ENCODE measurements at regions of chr9 and their contacts with region 1.

Region 1: DNA sequence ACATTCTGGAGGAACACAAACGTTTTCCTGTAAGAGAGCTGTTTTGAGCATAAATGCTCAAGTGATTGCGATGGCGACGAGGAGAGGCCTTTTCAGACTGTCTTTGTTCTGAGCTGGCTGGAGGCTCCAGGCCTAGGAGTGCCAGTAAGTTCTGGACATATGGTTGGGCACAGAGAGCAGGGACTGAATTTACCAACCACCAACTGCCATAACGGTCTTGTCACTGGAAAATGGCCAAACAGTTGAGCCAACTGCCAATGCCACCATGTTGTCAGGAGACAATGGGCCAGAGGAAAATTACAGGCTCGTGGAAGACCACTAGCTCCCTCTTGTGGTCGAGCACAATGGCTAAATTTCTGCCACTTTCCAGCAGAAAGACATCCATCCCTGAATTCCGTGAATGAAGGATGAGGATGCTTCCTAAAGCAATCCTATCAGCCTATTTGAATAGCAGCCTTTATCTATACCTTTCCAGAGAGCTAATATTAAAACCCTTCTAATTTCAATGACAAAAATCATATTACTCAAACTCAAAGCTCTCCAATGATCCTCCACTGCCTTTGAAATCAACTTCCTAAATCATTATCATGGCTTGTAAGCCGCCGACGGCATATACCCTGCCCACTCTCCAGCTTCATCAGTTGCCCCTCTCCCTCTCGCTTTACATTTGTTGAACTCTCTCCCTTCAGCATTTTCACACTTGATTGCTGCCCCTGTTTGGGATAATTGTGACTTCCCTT is 66.9 kb upstream of the GLIS3 start:
- DNase-seq: peak; percentile 64
- H3K4me3 ChIP-seq: no peak overlapping the region
- H3K27ac ChIP-seq: peak overlapping the region in 1 of 4 donors; percentile 27
- H3K4me1 ChIP-seq: no peaks in the 10 kb centered on the region
- H3K27me3 ChIP-seq: no peaks in the 10 kb centered on the region
- CTCF ChIP-seq: peak; percentile 48 to 73 (median 54)
- EP300 ChIP-seq: no peak
- POLR2A ChIP-seq: no peak

Region 2: DNA sequence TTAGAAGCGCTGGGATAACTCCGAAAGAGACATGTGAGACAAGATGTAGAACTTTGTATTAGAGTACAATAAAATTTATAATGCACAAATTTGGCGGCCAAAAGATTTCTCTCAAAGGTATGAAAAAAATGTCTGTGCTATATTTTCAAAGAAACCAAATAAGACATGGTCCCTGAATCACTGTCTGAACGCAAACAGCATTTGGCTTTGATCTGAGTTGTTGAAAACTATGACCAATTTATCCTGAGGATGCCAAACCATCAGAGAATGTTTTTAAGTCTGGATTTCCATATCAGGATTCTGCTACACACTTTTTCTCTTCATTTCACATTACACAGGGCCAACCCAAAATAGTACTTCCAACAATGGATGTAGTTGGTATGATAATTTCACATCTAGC is 57.0 kb before region 1 on chr9:
- intact Hi-C with region 1: loop called (anchors 5 kb)
- DNase-seq: no peak
- H3K4me3 ChIP-seq: no peak overlapping the region
- H3K27ac ChIP-seq: no peak overlapping the region
- H3K4me1 ChIP-seq: no peaks in the 10 kb centered on the region
- H3K27me3 ChIP-seq: no peaks in the 10 kb centered on the region
- CTCF ChIP-seq: no peak
- EP300 ChIP-seq: no peak
- POLR2A ChIP-seq: no peak

Region 3: GRCh38 chr9:4404156-4404555 is 37.4 kb after region 1 on chr9:
- intact Hi-C with region 1: no loop called
- DNase-seq: no peak
- H3K4me3 ChIP-seq: no peak overlapping the region
- H3K27ac ChIP-seq: no peak overlapping the region
- H3K4me1 ChIP-seq: no peaks in the 10 kb centered on the region
- H3K27me3 ChIP-seq: no peaks in the 10 kb centered on the region
- CTCF ChIP-seq: no peak
- EP300 ChIP-seq: no peak
- POLR2A ChIP-seq: no peak

Region 4: GRCh38 chr9:4519604-4520003 is 152.8 kb after region 1 on chr9:
- intact Hi-C with region 1: no loop called
- DNase-seq: no peak
- H3K4me3 ChIP-seq: no peak overlapping the region
- H3K27ac ChIP-seq: no peak overlapping the region
- H3K4me1 ChIP-seq: peaks cover 0 to 5% (median 0%) of the 10 kb centered on the region in 4 donors
- H3K27me3 ChIP-seq: no peaks in the 10 kb centered on the region
- CTCF ChIP-seq: no peak
- EP300 ChIP-seq: no peak
- POLR2A ChIP-seq: no peak